Common myeloid progenitor, CD34-positive (primary cell): ENCODE measurements at regions of chr19 and their contacts with region 1.

Region 1: GRCh38 chr19:13181747-13182388 is 31.7 kb downstream of the IER2 start:
- DNase-seq: peak; percentile 52 to 91 (median 87)
- H3K4me3 ChIP-seq: peak overlapping the region in 2 of 7 experiments; percentile 10 to 28
- H3K27ac ChIP-seq: peak overlapping the region in 1 of 2 experiments; percentile 43
- H3K4me1 ChIP-seq: peaks cover 0 to 22% (median 19%) of the 10 kb centered on the region in 4 experiments
- H3K27me3 ChIP-seq: no peaks in the 10 kb centered on the region

Region 2: DNA sequence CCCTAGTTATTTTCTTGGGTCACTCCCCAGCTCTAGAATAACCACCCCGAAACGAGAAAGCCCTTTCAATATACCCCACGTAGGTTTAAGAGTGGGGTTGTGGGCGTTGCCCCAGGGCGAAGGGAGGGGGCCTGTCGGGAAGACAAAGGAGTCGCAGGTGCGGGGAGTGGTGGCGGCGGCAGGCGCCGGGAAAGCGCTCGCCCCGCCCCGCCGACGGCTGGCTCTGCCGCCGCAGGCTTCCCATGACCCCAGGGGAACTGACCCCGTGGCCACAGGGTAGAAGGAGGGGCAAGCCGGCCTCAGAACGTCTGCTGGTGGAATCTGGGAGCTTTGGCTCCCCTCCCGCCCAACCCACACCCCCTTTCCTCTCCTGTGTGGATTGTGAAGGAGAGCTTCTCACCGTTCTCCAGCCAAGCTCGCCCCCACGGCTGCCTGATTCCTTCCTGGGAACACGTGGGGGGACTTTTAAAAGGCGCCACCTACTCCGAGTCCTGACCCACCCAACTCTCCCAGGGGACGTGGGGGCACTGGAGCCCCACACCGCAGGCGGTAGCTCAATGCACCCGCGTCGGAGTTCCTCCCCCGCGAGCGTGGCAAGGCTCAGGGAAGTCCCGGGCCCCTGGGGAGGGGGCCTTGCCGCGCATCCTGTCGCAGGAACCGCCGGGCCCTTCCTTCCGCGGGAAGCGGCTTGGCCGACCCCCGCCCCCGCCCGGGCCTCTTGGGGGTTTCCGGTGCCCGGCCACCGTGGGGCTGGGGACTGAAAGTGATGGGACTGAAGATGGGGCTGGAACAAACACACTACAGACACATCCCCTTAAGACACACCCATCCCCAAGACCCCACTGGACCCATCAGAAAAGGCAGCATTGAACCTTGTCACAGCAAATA is 26.2 kb before region 1 on chr19:
- CTCF ChIA-PET with region 1: interaction called, 7 read pairs
- POLR2A ChIA-PET with region 1: interaction called, 12 read pairs
- DNase-seq: peak; percentile 70 to 92 (median 89)
- H3K4me3 ChIP-seq: peak overlapping the region; percentile 81 to 99 (median 98)
- H3K27ac ChIP-seq: peak overlapping the region; percentile 54 to 96
- H3K4me1 ChIP-seq: peaks cover 3 to 57% (median 36%) of the 10 kb centered on the region in 4 experiments
- H3K27me3 ChIP-seq: no peaks in the 10 kb centered on the region

Region 3: DNA sequence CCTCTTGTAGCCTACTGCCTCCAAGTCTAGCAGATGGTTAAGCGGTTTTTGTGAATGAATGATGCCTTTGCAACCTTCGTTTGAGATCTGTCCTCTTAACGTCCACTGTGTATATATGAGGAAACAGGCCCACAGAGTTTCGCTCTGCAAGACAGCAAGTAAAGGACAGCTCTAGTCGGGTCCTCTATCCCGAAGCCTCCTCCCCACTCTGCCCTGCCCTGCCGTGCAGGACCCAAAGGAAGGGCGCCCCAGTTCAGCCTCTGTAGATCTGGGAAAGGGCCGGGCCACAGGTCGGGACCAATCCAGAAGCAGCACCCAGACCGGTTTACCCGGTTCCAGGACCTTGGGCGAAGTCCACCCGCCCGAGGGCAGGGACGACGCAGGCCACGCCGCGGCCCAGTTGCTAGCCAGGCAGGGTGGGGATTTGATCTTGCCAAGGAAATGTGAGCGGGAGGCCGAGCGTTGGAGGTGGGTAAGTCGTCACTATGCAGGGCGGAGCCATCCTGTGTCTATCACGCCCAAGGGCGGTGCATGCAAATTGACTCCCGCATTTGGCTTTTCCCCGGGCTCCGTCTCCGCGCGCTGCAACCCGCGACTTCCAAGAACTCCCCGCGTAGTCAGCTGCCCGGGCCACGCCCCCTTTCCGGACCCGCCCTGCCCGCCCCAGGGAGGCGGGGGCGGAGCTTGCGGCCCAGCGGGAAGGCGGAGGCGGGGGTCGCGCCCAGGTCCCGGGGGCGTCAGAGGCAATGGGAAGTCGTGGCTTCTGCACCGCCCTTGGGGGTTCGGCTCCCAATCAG is 19.2 kb before region 1 on chr19:
- CTCF ChIA-PET with region 1: interaction called, 11 read pairs
- POLR2A ChIA-PET with region 1: interaction called, 10 read pairs
- DNase-seq: peak; percentile 88 to 90 (median 90)
- H3K4me3 ChIP-seq: peak overlapping the region; percentile 30 to 78 (median 59)
- H3K27ac ChIP-seq: peak overlapping the region in 1 of 2 experiments; percentile 83
- H3K4me1 ChIP-seq: peaks cover 12 to 74% (median 60%) of the 10 kb centered on the region in 4 experiments
- H3K27me3 ChIP-seq: no peaks in the 10 kb centered on the region

Region 4: DNA sequence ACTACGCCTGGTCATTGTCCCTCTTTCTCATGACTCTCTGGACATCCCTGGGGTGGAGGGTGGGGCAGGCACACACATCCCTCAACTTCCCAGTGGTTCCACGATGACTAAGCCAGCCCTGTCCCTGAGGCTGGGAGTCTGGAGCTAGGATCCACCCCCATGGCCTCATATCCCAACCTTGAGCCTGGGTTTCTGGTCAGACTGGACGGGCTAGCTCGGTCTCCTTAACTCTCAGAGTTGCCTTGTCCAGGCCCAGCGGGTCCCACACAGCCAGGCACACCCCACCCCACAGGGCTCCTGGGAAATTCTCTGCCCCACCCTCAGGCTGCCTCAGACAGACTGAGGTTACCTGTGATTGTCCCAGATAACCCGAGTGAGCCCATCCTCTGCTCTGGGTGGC is 12.1 kb before region 1 on chr19:
- CTCF ChIA-PET with region 1: interaction called, 16 read pairs
- POLR2A ChIA-PET with region 1: interaction called, 10 read pairs
- DNase-seq: no peak
- H3K4me3 ChIP-seq: no peak overlapping the region
- H3K27ac ChIP-seq: no peak overlapping the region
- H3K4me1 ChIP-seq: peaks cover 11 to 56% (median 49%) of the 10 kb centered on the region in 4 experiments
- H3K27me3 ChIP-seq: no peaks in the 10 kb centered on the region